ENCODE measurements at regions of chr15 and their contacts with region 1.

Region 1: DNA sequence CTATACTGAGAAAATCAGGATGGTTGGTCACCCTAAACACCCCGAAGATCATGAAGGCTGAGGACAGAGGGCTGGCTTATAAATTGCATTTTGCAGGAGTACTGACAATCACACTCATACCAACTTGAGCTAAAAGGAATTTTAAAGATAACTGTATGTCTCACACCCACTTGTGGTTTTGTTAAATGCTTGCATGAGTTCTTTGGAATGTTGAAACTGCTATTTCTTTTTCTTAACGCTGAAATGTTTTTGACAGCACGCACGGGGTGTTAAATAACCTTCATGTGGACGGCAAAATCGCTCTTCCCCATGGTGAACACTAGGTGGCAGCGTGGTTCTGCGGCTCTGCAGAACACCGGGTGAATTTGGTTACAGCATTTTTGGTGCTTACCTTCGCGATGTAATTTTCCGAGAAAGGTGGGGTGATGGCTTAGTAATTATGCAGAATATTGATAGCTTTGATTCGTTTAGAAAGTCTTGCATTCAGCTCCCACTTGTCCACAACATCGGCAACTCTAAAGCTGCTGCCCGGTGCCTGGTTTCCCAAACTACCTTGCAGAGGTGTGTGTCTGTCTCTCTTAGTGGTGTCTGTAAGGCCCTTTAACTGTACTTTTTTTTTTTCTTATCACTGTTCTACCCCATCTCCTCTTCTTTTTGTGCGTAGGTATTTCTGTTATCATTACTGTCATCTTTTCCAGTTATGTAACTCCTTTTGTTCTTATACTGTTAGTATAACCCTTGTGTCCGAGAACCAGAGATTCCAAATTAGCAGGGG is 51.7 kb downstream of the ARNT2 start:
- DNase-seq: no peak
- H3K4me3 ChIP-seq: no peak overlapping the region
- H3K27ac ChIP-seq: no peak overlapping the region
- H3K4me1 ChIP-seq: peaks cover 0 to 22% (median 11%) of the 10 kb centered on the region in 6 donors
- H3K27me3 ChIP-seq: peaks cover 0 to 25% (median 0%) of the 10 kb centered on the region in 7 donors
- CTCF ChIP-seq: peak; percentile 69 to 91 (median 86)
- POLR2A ChIP-seq: no peak

Region 2: DNA sequence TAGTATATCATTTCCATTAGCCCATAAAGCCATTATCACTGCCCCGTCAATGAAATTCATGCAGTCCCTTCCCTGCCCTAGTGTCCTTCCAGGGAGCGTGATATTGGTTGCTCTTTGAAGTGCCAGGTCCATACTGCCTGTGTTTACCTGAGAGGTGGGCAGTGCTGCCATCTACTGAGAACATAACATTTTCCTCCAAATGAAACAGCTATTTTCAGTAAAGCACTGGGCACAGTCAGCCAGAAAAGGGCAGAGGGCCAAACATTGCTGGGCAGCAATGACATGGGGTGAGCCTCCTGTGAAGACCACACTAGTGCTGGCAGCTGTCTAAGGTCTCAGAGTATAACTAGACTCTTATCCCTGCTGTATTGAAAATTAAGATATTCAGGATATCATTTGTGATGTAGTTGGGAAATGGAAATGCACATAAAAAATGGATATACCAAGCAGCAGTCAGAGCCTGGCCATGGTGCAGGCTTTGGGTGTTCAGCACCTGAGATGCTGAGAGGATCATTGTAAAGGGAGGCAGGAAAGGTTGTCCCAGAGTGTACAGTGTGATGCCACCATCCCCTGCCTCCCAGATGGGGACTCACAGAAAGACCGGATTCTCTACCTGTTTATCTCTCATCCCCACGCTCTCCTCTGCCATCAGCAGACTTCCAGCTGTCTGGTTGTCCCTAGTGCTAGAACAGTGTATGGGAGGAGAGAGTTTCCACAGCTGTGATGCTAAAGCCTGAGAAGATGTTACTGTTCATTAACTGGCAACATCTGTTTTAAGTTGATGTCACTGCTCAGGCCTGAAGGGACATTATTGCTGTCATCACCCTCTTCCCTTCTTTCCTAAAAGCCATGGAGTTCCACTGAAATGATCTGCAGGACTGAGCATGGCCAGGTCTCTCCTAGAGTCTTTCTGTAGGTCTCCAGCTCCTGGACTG is 57.1 kb after region 1 on chr15:
- intact Hi-C with region 1: no loop called
- DNase-seq: no peak
- H3K4me3 ChIP-seq: no peak overlapping the region
- H3K27ac ChIP-seq: no peak overlapping the region
- H3K4me1 ChIP-seq: no peaks in the 10 kb centered on the region
- H3K27me3 ChIP-seq: no peaks in the 10 kb centered on the region
- CTCF ChIP-seq: no peak
- POLR2A ChIP-seq: no peak

Region 3: DNA sequence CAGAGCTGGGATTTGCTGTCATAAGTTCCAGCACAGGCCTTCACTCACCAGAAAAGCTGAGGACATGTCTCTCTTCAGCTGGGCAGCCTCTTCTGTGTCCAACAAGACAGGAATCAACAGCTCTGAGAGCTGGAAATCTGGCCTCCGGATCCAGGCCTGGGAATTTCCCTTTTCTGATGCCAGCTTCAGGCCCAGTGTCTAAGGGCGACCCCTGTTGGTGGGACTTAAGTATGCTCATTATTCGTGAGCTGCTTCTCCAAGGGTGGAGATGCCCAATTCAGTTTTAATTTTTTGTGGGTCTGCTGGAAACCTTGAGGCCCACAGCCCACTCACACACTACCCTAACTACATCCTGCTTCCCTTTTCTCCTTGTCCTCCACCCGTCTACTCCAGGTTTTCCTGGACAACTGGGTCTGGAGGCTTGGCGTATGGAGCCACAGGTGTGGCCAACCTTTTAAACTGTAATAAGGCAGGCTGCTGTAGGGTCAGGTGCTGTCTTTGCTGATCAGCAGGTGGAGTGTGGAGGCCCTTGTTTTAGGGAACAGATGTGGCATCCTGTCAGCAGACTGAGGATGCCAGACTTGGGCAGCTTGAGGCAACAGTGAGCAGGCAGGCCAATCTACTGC is 320.7 kb after region 1 on chr15:
- intact Hi-C with region 1: loop called (anchors 2 kb)
- DNase-seq: peak; percentile 77
- H3K4me3 ChIP-seq: no peak overlapping the region
- H3K27ac ChIP-seq: peak overlapping the region in 7 of 8 donors; percentile 29 to 59 (median 49)
- H3K4me1 ChIP-seq: peaks cover 16 to 56% (median 37%) of the 10 kb centered on the region in 6 donors
- H3K27me3 ChIP-seq: peaks cover 0 to 49% (median 25%) of the 10 kb centered on the region in 7 donors
- CTCF ChIP-seq: peak; percentile 44 to 87 (median 73)
- POLR2A ChIP-seq: no peak

Region 4: DNA sequence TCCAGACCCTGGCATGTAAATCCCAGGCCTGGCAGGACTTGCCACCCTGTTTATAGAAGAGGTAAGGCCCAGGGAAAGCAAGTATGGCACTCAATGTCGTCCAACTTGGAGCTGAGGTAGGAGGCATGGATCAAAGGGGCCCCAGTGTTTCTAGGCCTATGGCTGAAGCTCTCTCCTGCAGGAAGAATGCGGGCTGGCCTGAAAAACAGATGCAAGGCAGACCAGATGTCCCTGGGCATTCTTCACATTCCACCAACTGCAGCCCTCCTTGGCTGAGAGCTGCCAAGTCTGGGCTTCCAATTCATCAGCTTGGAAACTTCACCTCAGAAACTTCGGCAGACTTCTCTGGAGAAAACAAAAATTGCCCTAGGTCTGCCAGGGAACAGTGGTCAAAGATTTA is 511.6 kb after region 1 on chr15:
- intact Hi-C with region 1: loop called (anchors 5 kb)
- DNase-seq: no peak
- H3K4me3 ChIP-seq: no peak overlapping the region
- H3K27ac ChIP-seq: no peak overlapping the region
- H3K4me1 ChIP-seq: peaks cover 0 to 8% (median 3%) of the 10 kb centered on the region in 6 donors
- H3K27me3 ChIP-seq: no peaks in the 10 kb centered on the region
- CTCF ChIP-seq: no peak
- POLR2A ChIP-seq: no peak